Activated naive CD4-positive, alpha-beta T cell treated with anti-CD3 and anti-CD28 coated beads for 36 hours (primary cell): ENCODE measurements at regions of chr11 and their contacts with region 1.

Region 1: DNA sequence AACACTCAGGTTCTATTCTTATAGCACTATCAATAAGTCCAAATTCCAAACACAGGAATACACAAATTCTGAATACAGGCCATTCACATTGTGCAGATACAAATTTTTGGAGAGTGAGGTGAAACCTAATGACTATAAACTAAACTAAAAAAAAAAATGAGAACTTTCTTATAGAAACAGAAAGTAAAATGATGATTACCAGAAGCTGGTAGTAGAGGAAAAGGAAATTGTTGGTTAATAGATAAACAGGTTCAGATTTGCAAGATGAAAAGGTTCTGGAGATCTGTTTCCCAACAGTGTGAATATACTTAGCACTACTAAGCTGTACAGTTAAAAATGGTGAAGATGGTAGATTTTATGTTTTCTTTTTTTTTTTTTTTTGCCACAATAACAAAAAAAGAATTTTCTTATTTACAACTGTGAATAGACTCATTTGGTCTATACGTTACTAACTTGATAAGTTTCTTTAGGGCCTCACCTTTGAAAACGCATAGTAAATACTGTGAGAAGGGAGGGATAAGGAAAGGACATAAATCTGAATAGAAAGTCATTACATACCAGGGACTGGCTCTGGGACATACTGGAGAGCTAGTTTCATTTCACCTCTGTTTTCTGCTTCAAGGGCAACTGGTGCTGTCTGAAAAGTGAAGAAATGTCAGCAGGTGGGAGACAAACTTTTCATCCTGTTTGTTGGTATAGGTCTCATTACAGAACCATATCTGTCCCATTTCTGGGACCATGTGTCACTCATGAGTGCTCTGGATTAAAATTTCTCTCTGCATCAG is 14.2 kb upstream of the CCDC89 start:
- DNase-seq: no peak
- H3K4me3 Mint-ChIP-seq: no peak overlapping the region
- H3K27ac Mint-ChIP-seq: peak overlapping the region; percentile 36
- H3K4me1 Mint-ChIP-seq: peaks cover 35% of the 10 kb centered on the region
- H3K27me3 Mint-ChIP-seq: no peaks in the 10 kb centered on the region

Region 2: DNA sequence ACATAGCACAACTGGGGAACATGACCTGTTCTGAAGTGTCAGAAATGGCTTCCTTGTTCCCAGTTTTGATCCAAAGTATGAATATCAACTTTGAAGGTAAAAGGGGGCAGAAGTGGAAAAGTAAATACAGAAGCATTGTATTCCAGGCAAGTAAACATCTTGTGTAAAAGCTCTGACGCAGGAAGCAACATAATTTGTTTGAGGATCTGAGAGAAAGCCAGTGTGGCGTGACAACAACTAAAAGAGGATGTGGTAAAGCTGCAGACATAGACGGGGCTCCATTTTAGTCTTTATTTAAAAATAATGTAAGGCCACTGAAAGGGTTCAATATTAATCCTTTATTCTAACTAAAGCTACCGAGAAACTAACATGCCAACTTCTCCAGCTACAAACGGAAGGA is 383.2 kb before region 1 on chr11:
- CTCF ChIA-PET with region 1: no interaction called
- intact Hi-C with region 1: no loop called
- DNase-seq: no peak
- H3K4me3 Mint-ChIP-seq: no peak overlapping the region
- H3K27ac Mint-ChIP-seq: no peak overlapping the region
- H3K4me1 Mint-ChIP-seq: no peaks in the 10 kb centered on the region
- H3K27me3 Mint-ChIP-seq: no peaks in the 10 kb centered on the region

Region 3: DNA sequence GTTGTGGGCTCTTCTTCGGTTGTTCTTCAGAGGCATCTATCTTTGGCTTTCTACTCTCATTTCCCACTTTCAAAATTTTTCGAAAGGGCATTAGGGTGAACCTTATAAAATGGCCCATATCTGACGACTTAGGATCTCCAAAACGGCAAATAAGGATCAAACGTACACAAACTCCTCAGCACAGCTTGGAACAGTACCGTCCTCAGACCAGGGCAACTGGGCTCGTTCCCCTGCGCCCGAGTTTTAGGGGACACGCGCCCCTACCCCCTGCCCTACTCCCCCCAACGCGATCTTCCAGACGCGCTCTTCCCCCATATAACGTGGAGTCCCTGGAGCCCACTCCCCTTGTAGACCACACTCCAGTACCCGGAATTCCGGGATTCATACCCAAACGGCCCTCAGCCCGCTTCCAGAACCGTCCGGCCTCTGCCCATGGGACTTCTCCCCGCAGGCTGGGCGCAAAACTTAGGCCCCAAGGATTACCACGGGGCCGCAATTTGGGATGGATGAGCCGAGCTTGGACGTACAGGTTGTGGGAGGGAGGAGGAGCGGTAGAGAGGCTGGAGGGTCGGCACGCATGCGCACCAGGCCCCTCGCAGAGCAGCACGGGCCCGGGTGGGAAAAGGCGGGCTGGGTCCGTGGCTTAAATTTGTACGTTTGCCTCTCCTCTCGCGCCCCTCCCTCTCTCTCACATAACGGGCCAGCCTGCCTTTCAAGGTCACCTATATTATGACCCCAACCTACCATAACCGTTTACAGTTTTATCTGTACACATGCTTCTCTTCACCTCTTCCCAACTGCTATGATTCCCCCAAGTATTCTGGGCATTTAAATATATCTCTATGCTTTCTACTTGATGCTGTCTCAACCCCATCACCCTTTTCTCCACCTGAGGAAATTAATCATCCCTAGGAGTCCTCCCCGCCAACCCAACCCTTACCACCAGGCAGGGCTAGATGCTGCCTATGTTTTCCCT is 17.5 kb before region 1 on chr11:
- CTCF ChIA-PET with region 1: interaction called, 21 read pairs
- intact Hi-C with region 1: loop called (anchors 2 kb)
- DNase-seq: peak; percentile 72
- H3K4me3 Mint-ChIP-seq: peak overlapping the region; percentile 73
- H3K27ac Mint-ChIP-seq: peak overlapping the region; percentile 57
- H3K4me1 Mint-ChIP-seq: peaks cover 12% of the 10 kb centered on the region
- H3K27me3 Mint-ChIP-seq: no peaks in the 10 kb centered on the region

Region 4: GRCh38 chr11:85718991-85719807 is 19.1 kb after region 1 on chr11:
- CTCF ChIA-PET with region 1: interaction called, 3 read pairs
- intact Hi-C with region 1: loop called (anchors 1 kb)
- DNase-seq: no peak
- H3K4me3 Mint-ChIP-seq: no peak overlapping the region
- H3K27ac Mint-ChIP-seq: no peak overlapping the region
- H3K4me1 Mint-ChIP-seq: peaks cover 8% of the 10 kb centered on the region
- H3K27me3 Mint-ChIP-seq: no peaks in the 10 kb centered on the region

Region 5: DNA sequence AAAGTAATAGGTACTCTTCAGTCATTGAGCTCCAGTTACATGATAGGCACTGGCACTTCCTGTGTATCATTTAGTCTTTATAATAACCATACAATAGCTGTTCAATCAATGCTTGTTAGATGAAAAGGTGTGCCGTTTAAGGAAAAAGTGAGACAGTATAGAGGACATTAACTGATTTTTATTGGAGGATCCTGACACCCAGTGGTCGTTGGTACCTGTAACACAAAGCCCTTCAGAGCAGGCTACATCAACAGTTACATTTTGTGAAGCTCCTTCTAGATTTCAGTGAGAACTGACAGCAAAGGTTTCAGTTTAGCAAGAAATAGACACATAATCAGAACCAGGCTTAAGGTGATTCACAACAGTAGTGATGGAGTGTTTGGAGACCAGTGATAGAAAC is 718.8 kb after region 1 on chr11:
- CTCF ChIA-PET with region 1: no interaction called
- intact Hi-C with region 1: loop called (anchors 5 kb)
- DNase-seq: peak; percentile 18
- H3K4me3 Mint-ChIP-seq: no peak overlapping the region
- H3K27ac Mint-ChIP-seq: no peak overlapping the region
- H3K4me1 Mint-ChIP-seq: peaks cover 3% of the 10 kb centered on the region
- H3K27me3 Mint-ChIP-seq: no peaks in the 10 kb centered on the region